ENCODE measurements at regions of chr16 and their contacts with region 1.

Region 1: DNA sequence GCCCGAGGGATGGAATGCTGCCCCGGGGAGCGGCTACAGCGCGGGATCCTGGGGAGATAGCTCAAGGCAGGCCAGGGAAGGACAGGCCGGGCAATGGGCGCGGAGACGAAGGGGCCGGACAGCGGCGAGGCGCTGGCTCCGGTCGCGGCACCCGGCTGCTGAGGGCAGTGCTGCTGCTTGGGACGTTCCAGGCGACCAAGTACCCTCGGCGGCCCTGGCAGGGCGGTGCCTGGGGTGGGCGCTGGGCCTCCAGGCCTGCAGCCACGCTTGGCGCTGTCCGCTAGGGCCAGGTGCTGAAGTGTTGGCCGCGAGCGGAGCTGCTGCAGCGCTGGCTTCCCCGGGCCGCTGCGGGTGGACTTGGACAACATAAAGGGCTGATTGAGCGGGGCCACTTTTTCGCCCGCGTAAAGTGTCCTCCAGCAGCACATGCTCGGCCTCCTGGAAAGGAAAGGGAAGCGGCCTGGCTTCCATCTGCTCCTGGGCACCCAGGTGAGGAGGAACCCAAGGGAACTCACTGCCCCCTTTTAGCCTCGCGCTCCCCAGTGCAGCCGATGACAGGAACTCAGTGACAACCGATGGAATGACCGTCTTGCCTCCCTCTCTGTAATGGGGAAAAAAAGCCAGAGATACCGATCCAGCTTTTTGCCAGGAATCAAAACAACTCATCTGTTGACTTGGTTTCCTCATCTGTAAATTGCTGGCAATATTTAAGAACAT is 23.7 kb downstream of the CLEC3A start:
- DNase-seq: peak; percentile 55 to 71
- ATAC-seq: peak; percentile 76 to 98 (median 94)
- H3K4me3 ChIP-seq: peak overlapping the region in 1 of 10 donors; percentile 22
- H3K27ac ChIP-seq: no peak overlapping the region
- H3K4me1 ChIP-seq: no peaks in the 10 kb centered on the region
- H3K27me3 ChIP-seq: peaks cover 0 to 38% (median 10%) of the 10 kb centered on the region in 7 donors
- CTCF ChIP-seq: peak in 1 of 9 donors; percentile 18

Region 2: DNA sequence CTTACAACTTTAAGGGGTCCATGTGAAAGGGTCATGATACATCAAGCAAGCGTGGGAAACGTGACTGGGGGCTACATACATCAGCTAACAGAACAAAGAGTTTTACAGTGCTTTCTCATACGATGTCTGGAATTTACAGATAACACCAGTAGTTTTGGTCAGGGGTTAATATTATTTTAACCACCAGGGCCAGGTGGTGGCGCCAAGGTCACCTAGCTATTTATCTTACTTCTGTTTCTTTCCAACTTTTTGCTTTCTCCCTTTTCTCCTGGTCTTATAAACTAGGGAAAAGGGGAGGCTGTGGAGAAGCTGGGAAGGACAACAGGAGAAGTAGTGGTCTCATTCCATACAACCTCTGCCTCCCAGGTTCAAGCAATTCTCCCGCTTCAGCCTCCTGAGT is 14.3 kb after region 1 on chr16:
- intact Hi-C with region 1: loop called in 1 of 10 experiments (anchors 1 kb)
- DNase-seq: no peak
- ATAC-seq: no peak
- H3K4me3 ChIP-seq: no peak overlapping the region
- H3K27ac ChIP-seq: no peak overlapping the region
- H3K4me1 ChIP-seq: no peaks in the 10 kb centered on the region
- H3K27me3 ChIP-seq: peaks cover 0 to 12% (median 5%) of the 10 kb centered on the region in 7 donors
- CTCF ChIP-seq: no peak

Region 3: GRCh38 chr16:78134929-78135619 is 89.1 kb after region 1 on chr16:
- intact Hi-C with region 1: no loop called
- DNase-seq: no peak
- ATAC-seq: no peak
- H3K4me3 ChIP-seq: no peak overlapping the region
- H3K27ac ChIP-seq: no peak overlapping the region
- H3K4me1 ChIP-seq: no peaks in the 10 kb centered on the region
- H3K27me3 ChIP-seq: no peaks in the 10 kb centered on the region
- CTCF ChIP-seq: no peak

Measured in heart right ventricle (tissue), 16 donors.